Panc1 (cell line): ENCODE measurements at regions of chr17 and their contacts with region 1.

Region 1: GRCh38 chr17:39679521-39680192 is 8.2 kb downstream of the PGAP3 start:
- DNase-seq: no peak
- ATAC-seq: no peak
- H3K4me3 ChIP-seq: no peak overlapping the region
- H3K27ac ChIP-seq: no peak overlapping the region
- H3K4me1 ChIP-seq: peaks cover 5% of the 10 kb centered on the region; the same call in 1 of the 2 replicates
- H3K27me3 ChIP-seq: no peaks in the 10 kb centered on the region
- CTCF ChIP-seq: no peak

Region 2: GRCh38 chr17:39605492-39606433 is 73.9 kb before region 1 on chr17:
- CTCF ChIA-PET with region 1: no interaction called
- POLR2A ChIA-PET with region 1: no interaction called
- in situ Hi-C with region 1: no loop called
- intact Hi-C with region 1: no loop called
- DNase-seq: no peak
- ATAC-seq: peak; percentile 71
- H3K4me3 ChIP-seq: peak overlapping the region in 1 of 2 experiments; percentile 20; a peak in 2 of 4 replicates
- H3K27ac ChIP-seq: no peak overlapping the region
- H3K4me1 ChIP-seq: no peaks in the 10 kb centered on the region
- H3K27me3 ChIP-seq: peaks cover 14% of the 10 kb centered on the region
- CTCF ChIP-seq: no peak

Region 3: DNA sequence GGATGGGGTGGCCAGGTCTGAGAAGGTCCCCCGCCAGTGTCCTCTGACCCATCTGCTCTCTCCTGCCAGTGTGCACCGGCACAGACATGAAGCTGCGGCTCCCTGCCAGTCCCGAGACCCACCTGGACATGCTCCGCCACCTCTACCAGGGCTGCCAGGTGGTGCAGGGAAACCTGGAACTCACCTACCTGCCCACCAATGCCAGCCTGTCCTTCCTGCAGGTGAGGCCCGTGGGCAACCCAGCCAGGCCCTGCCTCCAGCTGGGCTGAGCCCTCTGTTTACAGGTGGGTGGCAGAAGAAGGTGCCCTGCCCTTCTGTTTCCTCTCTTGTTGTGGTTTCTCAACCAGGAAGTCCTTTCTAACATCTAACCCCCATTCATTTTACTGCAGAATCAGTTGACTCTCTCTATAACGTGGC is 27.3 kb after region 1 on chr17:
- CTCF ChIA-PET with region 1: no interaction called
- POLR2A ChIA-PET with region 1: no interaction called
- in situ Hi-C with region 1: no loop called
- intact Hi-C with region 1: no loop called
- DNase-seq: no peak
- ATAC-seq: no peak
- H3K4me3 ChIP-seq: no peak overlapping the region
- H3K27ac ChIP-seq: no peak overlapping the region
- H3K4me1 ChIP-seq: peaks cover 34% of the 10 kb centered on the region
- H3K27me3 ChIP-seq: no peaks in the 10 kb centered on the region
- CTCF ChIP-seq: no peak

Region 4: DNA sequence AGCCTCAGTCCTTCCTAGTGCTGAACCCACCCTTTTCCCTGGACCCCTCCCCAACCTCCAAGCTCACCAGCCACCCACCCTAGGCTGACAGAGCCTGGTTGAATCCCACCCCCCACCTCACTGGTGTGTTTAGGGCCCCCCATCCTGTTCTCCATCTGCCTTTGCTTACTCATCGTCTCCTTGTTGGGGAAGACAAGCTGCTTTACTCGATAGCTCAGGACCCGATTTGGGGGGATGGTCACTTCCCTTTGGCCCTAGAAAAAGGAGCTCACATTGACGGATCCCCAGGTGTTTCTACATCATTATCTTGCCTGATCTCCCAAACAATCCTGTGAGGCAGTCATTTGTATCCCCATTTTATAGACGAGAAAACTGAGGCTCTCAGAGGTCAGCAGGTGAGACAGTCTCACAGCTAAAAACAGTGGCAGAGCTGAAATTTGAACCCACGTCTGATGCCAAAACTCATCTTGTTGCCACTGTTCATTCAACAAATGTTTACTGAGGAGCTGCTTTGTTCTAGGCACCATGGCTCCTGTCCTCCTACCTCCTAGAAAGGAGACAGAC is 229.2 kb after region 1 on chr17:
- CTCF ChIA-PET with region 1: no interaction called
- POLR2A ChIA-PET with region 1: interaction called, 11 read pairs
- in situ Hi-C with region 1: no loop called
- intact Hi-C with region 1: no loop called
- DNase-seq: no peak
- ATAC-seq: no peak
- H3K4me3 ChIP-seq: no peak overlapping the region
- H3K27ac ChIP-seq: no peak overlapping the region
- H3K4me1 ChIP-seq: no peaks in the 10 kb centered on the region
- H3K27me3 ChIP-seq: no peaks in the 10 kb centered on the region
- CTCF ChIP-seq: no peak